ENCODE measurements at regions of chr5 and their contacts with region 1.

Region 1: DNA sequence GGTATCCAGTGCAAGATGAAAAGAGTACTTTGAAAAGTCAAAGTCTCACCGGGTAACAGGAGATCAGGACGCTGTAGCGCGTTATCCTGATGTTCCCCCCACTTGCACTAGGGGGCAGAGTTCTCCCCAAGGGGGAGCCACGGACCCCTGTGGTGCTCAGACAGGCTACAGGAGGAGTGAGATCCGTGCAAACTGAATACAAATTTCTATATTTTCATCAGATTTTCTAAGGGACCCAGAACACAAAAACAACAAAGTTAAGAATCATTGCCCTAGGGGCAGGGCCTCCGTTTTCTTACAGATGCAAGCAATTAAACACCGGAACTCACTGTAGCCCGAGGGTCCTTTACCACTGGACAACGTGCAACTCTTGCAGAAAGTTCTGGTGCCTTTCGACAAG is 2.0 kb downstream of the MYO10 start:
- DNase-seq: peak in 4 of 5 donors; percentile 37 to 74 (median 54)
- ATAC-seq: peak in 3 of 4 donors; percentile 43 to 79 (median 52)
- H3K4me3 ChIP-seq: peak overlapping the region in 11 of 12 donors; percentile 60 to 90 (median 74)
- H3K27ac ChIP-seq: no peak overlapping the region
- H3K4me1 ChIP-seq: peaks cover 0 to 28% (median 11%) of the 10 kb centered on the region in 12 donors
- H3K27me3 ChIP-seq: peaks cover 0 to 65% (median 24%) of the 10 kb centered on the region in 9 donors
- CTCF ChIP-seq: peak; percentile 70 to 86 (median 78)
- POLR2A ChIP-seq: no peak

Region 2: GRCh38 chr5:17021602-17021932 is 87.4 kb after region 1 on chr5:
- intact Hi-C with region 1: loop called in 1 of 10 experiments (anchors 2 kb)
- DNase-seq: no peak
- ATAC-seq: no peak
- H3K4me3 ChIP-seq: no peak overlapping the region
- H3K27ac ChIP-seq: peak overlapping the region in 7 of 12 donors; percentile 33 to 71 (median 59)
- H3K4me1 ChIP-seq: peaks cover 0 to 15% (median 0%) of the 10 kb centered on the region in 12 donors
- H3K27me3 ChIP-seq: no peaks in the 10 kb centered on the region
- CTCF ChIP-seq: no peak
- POLR2A ChIP-seq: no peak

Region 3: DNA sequence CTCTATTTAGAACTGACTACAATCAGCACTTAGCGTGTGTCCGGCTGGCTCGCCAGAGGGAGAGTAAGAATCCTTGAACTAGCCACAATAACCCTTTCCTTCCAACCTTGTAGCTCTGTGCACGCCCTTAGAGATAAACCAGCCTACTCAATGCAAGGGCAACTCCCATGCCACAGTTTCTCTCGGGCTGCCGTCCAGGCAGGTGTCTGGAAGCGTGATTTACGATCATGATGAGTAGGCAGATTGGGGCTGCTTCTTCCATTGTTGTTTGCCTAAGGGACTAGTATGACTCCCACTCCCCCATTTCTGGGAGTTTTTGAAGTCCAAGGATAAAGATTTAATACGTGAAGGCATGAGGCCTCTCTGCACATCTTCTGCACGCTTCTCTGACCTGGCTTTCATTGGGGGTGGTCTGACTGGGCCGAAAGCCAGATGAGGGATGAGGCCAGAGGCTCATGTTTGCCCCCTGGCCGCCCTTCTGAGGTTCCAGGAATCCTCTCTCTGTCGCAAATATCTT is 135.9 kb after region 1 on chr5:
- intact Hi-C with region 1: loop called in 4 of 10 experiments (anchors 10 kb)
- DNase-seq: no peak
- ATAC-seq: peak in 3 of 4 donors; percentile 50 to 79 (median 56)
- H3K4me3 ChIP-seq: no peak overlapping the region
- H3K27ac ChIP-seq: peak overlapping the region in 5 of 12 donors; percentile 24 to 54 (median 26)
- H3K4me1 ChIP-seq: peaks cover 0 to 17% (median 4%) of the 10 kb centered on the region in 12 donors
- H3K27me3 ChIP-seq: no peaks in the 10 kb centered on the region
- CTCF ChIP-seq: no peak
- POLR2A ChIP-seq: no peak

Region 4: GRCh38 chr5:17132444-17133083 is 198.4 kb after region 1 on chr5:
- intact Hi-C with region 1: loop called (anchors 2 to 5 kb)
- DNase-seq: no peak
- ATAC-seq: no peak
- H3K4me3 ChIP-seq: no peak overlapping the region
- H3K27ac ChIP-seq: no peak overlapping the region
- H3K4me1 ChIP-seq: peaks cover 0 to 7% (median 0%) of the 10 kb centered on the region in 12 donors
- H3K27me3 ChIP-seq: no peaks in the 10 kb centered on the region
- CTCF ChIP-seq: peak; percentile 47 to 76 (median 70)
- POLR2A ChIP-seq: no peak